Activated T-helper 1 cell treated with anti-CD3 and anti-CD28 coated beads, Interleukin-12 subunit alpha, Interleukin-12 subunit beta, Interleukin-2, Interleukin-4 antibody, amounts not matched to agents 30 ng/mL and 10 ng/mL and 1 ng/mL, durations not matched to agents 14 hours and 24 hours and 36 hours (primary cell): ENCODE measurements at regions of chr2 and their contacts with region 1.

Region 1: GRCh38 chr2:37610638-37611289 is 60.7 kb downstream of the CDC42EP3 start:
- DNase-seq: no peak
- H3K4me3 Mint-ChIP-seq: no peak overlapping the region
- H3K27ac Mint-ChIP-seq: no peak overlapping the region
- H3K4me1 Mint-ChIP-seq: peaks cover 13% of the 10 kb centered on the region
- H3K27me3 Mint-ChIP-seq: peaks cover 2% of the 10 kb centered on the region

Region 2: DNA sequence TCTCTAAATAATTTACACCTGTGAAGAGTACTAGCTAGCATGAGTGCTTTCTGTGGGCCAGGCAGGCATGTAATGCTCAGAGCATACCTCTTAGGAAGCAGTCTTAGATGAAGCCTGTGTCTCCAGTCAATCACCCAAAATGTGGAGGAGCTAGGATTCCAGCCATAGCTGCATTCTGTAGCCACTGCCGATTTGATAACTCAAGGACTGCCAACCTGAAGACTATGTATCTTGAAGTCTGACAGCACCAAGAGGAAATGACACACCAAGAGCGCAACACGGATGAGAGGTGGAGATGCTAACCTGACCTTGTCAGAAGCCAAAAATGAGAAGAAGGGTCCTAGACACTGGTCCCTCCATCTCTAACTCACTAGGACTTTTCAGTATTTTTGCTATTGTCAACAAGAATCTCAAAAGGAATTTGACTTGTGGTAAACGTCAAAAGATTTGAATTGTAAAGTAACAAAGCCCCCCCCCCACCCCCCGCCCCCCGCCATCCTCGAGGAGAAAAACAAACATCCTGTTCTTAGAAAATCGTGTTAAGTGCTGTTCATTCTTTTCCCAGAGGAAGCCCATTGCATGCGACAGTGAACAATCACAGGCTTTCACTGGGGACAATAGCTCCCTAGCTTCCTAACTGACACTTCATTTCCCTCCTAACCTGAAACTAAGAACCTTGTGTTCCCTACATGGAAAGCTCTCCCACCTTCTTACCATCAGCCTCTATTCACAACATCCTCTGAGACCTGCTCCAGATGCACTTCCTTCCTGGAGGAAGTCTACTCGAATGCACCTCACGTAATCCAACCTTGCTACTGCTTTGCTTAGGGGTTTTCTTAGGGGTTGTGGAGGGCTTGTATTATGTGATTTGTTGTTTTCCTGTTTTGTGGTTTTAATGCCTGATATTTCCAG is 46.0 kb after region 1 on chr2:
- intact Hi-C with region 1: loop called (anchors 1 kb)
- DNase-seq: no peak
- H3K4me3 Mint-ChIP-seq: no peak overlapping the region
- H3K27ac Mint-ChIP-seq: peak overlapping the region; percentile 37
- H3K4me1 Mint-ChIP-seq: peaks cover 71% of the 10 kb centered on the region
- H3K27me3 Mint-ChIP-seq: no peaks in the 10 kb centered on the region